ENCODE measurements at regions of chr18 and their contacts with region 1.

Region 1: DNA sequence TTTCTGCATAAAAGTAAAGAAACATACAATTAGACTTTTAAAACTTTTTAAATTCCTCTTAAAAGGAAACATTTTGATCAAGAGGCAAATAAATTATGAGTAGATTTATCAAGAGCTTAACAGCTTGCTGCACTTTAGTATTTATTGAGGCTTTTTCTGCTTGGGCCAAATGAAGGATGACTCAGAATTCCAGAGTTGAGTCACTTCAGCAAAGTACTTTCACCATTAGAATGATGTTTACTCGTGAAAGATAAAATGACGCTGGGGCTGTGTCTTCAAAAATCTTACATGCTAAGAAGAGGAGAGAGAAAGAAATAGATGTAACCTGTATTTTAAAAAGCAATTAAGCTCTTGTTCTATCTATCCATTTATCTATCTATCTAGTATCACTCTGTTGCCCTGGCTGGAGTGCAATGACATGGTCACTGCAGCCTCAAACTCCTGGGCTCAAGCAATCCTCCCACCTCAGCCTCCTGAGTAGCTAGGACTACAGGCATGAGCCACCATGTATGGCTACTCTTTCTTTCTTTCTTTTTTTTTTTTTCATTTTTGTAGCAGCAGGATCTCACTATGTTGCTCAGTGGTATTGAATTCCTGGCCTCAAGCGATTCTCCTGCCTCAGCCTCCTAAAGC is 75.3 kb upstream of the RIOK3 start:
- DNase-seq: no peak
- H3K4me3 ChIP-seq: no peak overlapping the region
- H3K27ac ChIP-seq: peak overlapping the region; percentile 44 to 76 (median 64)
- H3K4me1 ChIP-seq: peaks cover 3 to 20% (median 13%) of the 10 kb centered on the region in 4 donors
- H3K27me3 ChIP-seq: no peaks in the 10 kb centered on the region
- CTCF ChIP-seq: no peak
- EP300 ChIP-seq: no peak
- POLR2A ChIP-seq: no peak

Region 2: DNA sequence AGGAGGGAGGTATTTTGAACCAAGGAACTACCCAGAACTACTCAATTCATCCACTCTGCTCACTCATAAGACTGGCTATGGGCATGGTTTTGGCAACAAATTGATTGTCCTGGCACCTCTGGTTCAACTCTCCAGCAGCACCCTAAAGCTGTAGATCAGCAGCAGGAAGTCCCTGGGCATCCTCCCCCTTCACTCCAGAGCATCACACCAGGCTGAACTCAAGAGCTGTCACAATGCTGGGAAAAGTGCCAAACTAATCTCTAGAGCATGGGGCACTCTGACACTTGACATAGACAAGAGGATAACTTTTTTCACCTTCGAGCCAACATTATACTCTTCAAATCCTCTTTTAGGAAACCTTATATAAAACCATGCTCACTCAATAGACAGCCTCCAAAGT is 598.8 kb before region 1 on chr18:
- in situ Hi-C with region 1: loop called in 1 of 4 experiments (anchors 25 kb)
- intact Hi-C with region 1: no loop called
- DNase-seq: no peak
- H3K4me3 ChIP-seq: no peak overlapping the region
- H3K27ac ChIP-seq: no peak overlapping the region
- H3K4me1 ChIP-seq: no peaks in the 10 kb centered on the region
- H3K27me3 ChIP-seq: no peaks in the 10 kb centered on the region
- CTCF ChIP-seq: no peak
- EP300 ChIP-seq: no peak
- POLR2A ChIP-seq: no peak

Region 3: DNA sequence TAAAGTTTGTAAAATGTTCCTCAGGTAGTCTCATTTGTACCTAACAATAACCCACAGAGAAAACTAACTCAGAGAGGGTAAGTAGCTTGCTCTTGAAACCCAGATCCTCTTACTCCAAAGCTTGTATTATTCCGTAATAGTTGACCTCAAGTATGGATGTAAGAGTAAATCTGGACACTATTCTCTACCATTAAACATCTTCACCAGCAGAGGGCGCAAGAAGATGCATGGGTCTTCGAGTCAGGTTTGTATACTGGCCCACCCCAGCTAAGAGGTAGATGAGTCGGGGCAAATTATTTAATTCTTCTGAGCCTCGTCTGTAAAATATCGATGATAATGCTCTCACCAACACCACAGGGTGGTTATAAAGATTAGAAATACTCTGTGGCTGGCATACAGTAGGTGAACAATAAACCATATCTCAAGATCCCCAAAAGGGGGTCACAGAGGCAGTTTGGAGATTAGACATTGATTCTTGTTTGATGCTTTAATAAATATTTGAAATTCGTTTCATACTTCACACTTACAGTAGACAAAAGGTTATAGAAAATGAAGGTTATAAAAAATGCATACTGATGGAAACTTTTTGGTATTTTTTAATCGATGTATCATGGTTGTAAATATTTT is 246.0 kb before region 1 on chr18:
- in situ Hi-C with region 1: loop called in 3 of 4 experiments (anchors 5 to 25 kb)
- intact Hi-C with region 1: loop called (anchors 5 kb)
- DNase-seq: peak; percentile 64
- H3K4me3 ChIP-seq: no peak overlapping the region
- H3K27ac ChIP-seq: no peak overlapping the region
- H3K4me1 ChIP-seq: peaks cover 4 to 27% (median 19%) of the 10 kb centered on the region in 4 donors
- H3K27me3 ChIP-seq: peaks cover 21% of the 10 kb centered on the region
- CTCF ChIP-seq: peak; percentile 78 to 83 (median 82)
- EP300 ChIP-seq: no peak
- POLR2A ChIP-seq: no peak